H1 (cell line): ENCODE measurements at regions of chr2 and their contacts with region 1.

Region 1: GRCh38 chr2:25309402-25309801 is 32.3 kb downstream of the DNMT3A start:
- DNase-seq: peak; percentile 69 to 85
- H3K4me3 ChIP-seq: no peak overlapping the region
- H3K27ac ChIP-seq: no peak overlapping the region
- H3K4me1 ChIP-seq: peaks cover 11 to 45% (median 38%) of the 10 kb centered on the region in 4 experiments
- H3K27me3 ChIP-seq: no peaks in the 10 kb centered on the region
- CTCF ChIP-seq: peak in 2 of 3 experiments; percentile 70 to 87; a peak in 3 of 4 replicates
- EP300 ChIP-seq: no peak
- POLR2A ChIP-seq: no peak
- RAD21 ChIP-seq: peak; percentile 77 to 81

Region 2: GRCh38 chr2:25257931-25258846 is 51.2 kb before region 1 on chr2:
- CTCF ChIA-PET with region 1: interaction called, 12 read pairs
- POLR2A ChIA-PET with region 1: interaction called, 4 read pairs
- DNase-seq: no peak
- H3K4me3 ChIP-seq: peak overlapping the region in 3 of 4 experiments; percentile 1 to 46 (median 6); a peak in 4 of 8 replicates
- H3K27ac ChIP-seq: no peak overlapping the region
- H3K4me1 ChIP-seq: peaks cover 37 to 48% (median 38%) of the 10 kb centered on the region in 4 experiments
- H3K27me3 ChIP-seq: no peaks in the 10 kb centered on the region; a peak in 1 of 7 replicates
- CTCF ChIP-seq: peak; percentile 22 to 62 (median 45)
- EP300 ChIP-seq: no peak
- POLR2A ChIP-seq: no peak
- RAD21 ChIP-seq: peak; percentile 28 to 44; a peak in 3 of 4 replicates

Region 3: GRCh38 chr2:25276569-25277465 is 32.6 kb before region 1 on chr2:
- CTCF ChIA-PET with region 1: interaction called, 53 read pairs
- POLR2A ChIA-PET with region 1: interaction called, 8 read pairs
- DNase-seq: peak in 1 of 2 experiments; percentile 94
- H3K4me3 ChIP-seq: peak overlapping the region; percentile 13 to 59 (median 26); a peak in 6 of 8 replicates
- H3K27ac ChIP-seq: no peak overlapping the region
- H3K4me1 ChIP-seq: peaks cover 3 to 33% (median 16%) of the 10 kb centered on the region in 4 experiments
- H3K27me3 ChIP-seq: no peaks in the 10 kb centered on the region
- CTCF ChIP-seq: peak; percentile 70 to 87 (median 71)
- EP300 ChIP-seq: no peak
- POLR2A ChIP-seq: no peak
- RAD21 ChIP-seq: peak; percentile 22 to 66; a peak in 3 of 4 replicates

Region 4: DNA sequence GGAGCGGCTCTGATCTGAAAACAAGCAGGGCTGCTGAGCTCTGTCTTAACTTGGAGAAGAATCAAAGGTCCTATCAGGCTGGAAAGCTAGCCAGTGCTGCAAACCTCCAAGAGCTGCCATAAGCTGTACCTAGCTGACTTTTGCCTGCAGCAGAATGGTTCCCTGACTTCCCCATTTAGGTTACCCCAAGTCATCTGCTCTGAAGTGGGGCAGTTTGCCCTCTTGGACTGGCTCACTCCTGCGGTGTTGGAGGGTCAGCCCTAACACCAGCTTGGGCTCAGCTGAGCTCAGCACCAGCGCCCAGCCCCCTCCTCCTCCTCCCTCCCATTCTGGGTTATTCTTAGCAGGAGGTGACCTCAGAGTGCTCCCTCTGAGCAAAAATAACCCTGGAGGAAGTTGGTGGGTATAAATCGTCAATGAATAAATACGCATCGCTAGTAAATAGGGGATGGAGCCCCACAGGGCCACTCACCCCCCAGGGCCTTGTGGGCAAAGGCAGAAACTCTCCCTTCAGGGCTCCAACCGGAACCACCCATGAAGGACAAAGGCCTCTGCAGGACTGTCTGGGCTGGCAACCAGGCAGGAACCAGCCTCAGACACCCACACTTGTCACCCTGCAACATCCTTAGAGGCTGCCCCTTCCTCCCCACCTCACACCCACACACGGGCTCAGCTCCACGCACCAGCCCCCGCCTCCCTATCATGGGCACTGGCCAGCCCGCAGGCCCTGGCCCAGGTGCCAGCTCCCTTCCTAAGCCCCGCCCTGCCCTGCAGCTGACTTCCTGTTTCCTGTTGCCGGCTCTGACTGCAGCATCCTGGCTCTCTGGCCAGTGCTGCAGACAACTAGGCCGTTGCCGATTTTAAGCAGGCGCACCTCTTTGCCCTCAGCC is 14.6 kb before region 1 on chr2:
- CTCF ChIA-PET with region 1: interaction called, 18 read pairs
- POLR2A ChIA-PET with region 1: no interaction called
- DNase-seq: no peak
- H3K4me3 ChIP-seq: no peak overlapping the region
- H3K27ac ChIP-seq: no peak overlapping the region
- H3K4me1 ChIP-seq: peaks cover 0 to 13% (median 8%) of the 10 kb centered on the region in 4 experiments; a peak in 5 of 7 replicates
- H3K27me3 ChIP-seq: no peaks in the 10 kb centered on the region
- CTCF ChIP-seq: no peak
- EP300 ChIP-seq: no peak
- POLR2A ChIP-seq: no peak
- RAD21 ChIP-seq: no peak

Region 5: DNA sequence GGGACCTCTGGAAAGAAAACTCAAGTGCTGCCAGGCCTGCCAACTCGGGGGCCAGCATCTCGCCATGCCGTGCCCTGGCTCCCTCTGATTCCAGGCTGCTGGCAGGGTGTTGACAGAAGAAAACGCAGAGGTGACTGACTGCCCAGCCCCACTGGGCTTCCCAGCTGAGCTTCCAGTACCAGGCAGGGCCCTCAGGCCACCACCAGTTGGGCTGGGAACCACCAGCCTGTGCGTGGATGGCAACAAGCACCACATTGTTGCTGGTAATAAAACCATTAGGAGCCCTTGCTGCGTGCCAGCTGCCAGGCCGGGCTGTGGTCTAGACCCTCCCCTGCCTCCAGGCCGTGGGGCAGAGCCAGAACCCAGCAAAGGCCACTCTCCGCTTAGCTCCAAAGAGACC is 23.2 kb after region 1 on chr2:
- CTCF ChIA-PET with region 1: interaction called, 178 read pairs
- POLR2A ChIA-PET with region 1: interaction called, 10 read pairs
- DNase-seq: no peak
- H3K4me3 ChIP-seq: no peak overlapping the region
- H3K27ac ChIP-seq: no peak overlapping the region
- H3K4me1 ChIP-seq: peaks cover 18 to 39% (median 27%) of the 10 kb centered on the region in 4 experiments
- H3K27me3 ChIP-seq: peaks cover 0 to 3% (median 0%) of the 10 kb centered on the region in 4 experiments; a peak in 2 of 7 replicates
- CTCF ChIP-seq: no peak
- EP300 ChIP-seq: no peak
- POLR2A ChIP-seq: no peak
- RAD21 ChIP-seq: no peak

Region 6: DNA sequence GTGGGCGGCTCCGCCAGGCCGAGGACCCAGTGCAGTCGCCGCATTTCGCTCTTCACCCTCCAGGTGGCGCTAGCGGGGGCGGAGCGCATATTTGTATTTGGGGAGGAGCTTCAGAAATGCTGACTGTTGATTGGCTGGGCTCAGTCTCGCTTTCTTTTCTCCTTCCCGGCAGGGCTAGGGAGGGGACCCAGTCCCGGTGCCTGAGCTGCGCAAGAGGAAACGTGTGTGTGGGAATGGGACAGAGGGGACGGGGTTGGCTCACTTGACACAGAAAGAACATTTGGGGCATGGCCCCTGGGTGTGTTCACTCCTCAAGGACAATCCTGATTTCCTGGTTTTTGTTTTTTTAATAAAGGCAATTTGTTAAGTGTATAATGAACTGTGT is 52.6 kb after region 1 on chr2:
- CTCF ChIA-PET with region 1: interaction called, 18 read pairs
- POLR2A ChIA-PET with region 1: interaction called, 10 read pairs
- DNase-seq: peak; percentile 88 to 100
- H3K4me3 ChIP-seq: peak overlapping the region in 1 of 4 experiments; percentile 44; a peak in 3 of 8 replicates
- H3K27ac ChIP-seq: no peak overlapping the region
- H3K4me1 ChIP-seq: peaks cover 0 to 9% (median 5%) of the 10 kb centered on the region in 4 experiments; a peak in 6 of 7 replicates
- H3K27me3 ChIP-seq: peaks cover 0 to 31% (median 22%) of the 10 kb centered on the region in 4 experiments; a peak in 6 of 7 replicates
- CTCF ChIP-seq: peak; percentile 85 to 96 (median 90)
- EP300 ChIP-seq: no peak
- POLR2A ChIP-seq: no peak
- RAD21 ChIP-seq: peak; percentile 43 to 54